IMR-90 (cell line): ENCODE measurements at regions of chr2 and their contacts with region 1.

Region 1: GRCh38 chr2:156229724-156230362 is 102.7 kb downstream of the NR4A2 start:
- DNase-seq: no peak
- ATAC-seq: no peak
- H3K4me3 ChIP-seq: no peak overlapping the region
- H3K27ac ChIP-seq: no peak overlapping the region
- H3K4me1 ChIP-seq: no peaks in the 10 kb centered on the region
- H3K27me3 ChIP-seq: no peaks in the 10 kb centered on the region
- CTCF ChIP-seq: no peak
- POLR2A ChIP-seq: no peak
- RAD21 ChIP-seq: no peak

Region 2: GRCh38 chr2:155310589-155310988 is 919.3 kb before region 1 on chr2:
- CTCF ChIA-PET with region 1: no interaction called
- POLR2A ChIA-PET with region 1: no interaction called
- dilution Hi-C with region 1: no loop called
- in situ Hi-C with region 1: no loop called
- intact Hi-C with region 1: no loop called
- DNase-seq: no peak
- ATAC-seq: no peak
- H3K4me3 ChIP-seq: no peak overlapping the region
- H3K27ac ChIP-seq: no peak overlapping the region
- H3K4me1 ChIP-seq: no peaks in the 10 kb centered on the region
- H3K27me3 ChIP-seq: no peaks in the 10 kb centered on the region
- CTCF ChIP-seq: peak; percentile 21; the same call in 1 of the 2 replicates
- POLR2A ChIP-seq: no peak
- RAD21 ChIP-seq: 0 out of 2 replicates have a peak, but pooled peaks have one; percentile 19

Region 3: GRCh38 chr2:156803248-156803647 is 573.4 kb after region 1 on chr2:
- CTCF ChIA-PET with region 1: no interaction called
- POLR2A ChIA-PET with region 1: no interaction called
- dilution Hi-C with region 1: no loop called
- in situ Hi-C with region 1: no loop called
- intact Hi-C with region 1: loop called (anchors 10 kb)
- DNase-seq: no peak
- ATAC-seq: no peak
- H3K4me3 ChIP-seq: no peak overlapping the region
- H3K27ac ChIP-seq: no peak overlapping the region
- H3K4me1 ChIP-seq: no peaks in the 10 kb centered on the region
- H3K27me3 ChIP-seq: no peaks in the 10 kb centered on the region
- CTCF ChIP-seq: no peak
- POLR2A ChIP-seq: no peak
- RAD21 ChIP-seq: no peak

Region 4: DNA sequence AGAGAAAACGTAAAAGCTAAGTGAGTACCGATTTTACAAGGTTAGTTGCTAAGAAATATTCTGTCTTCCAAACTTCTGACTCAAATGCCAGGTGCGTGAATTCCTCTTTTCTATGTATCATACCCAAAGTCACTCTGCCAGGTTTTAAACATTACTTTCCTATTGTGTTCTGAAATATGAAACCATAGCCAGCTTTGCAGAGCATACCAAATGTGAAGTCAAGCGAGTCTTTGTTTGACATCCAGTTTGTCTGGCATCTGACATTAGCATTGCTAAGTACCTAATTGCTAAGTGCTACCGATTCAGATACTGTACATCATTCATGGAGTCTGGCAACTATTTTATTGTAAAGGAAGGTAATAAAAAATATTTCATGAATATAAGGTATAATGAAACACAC is 705.8 kb after region 1 on chr2:
- CTCF ChIA-PET with region 1: no interaction called
- POLR2A ChIA-PET with region 1: no interaction called
- dilution Hi-C with region 1: no loop called
- in situ Hi-C with region 1: no loop called
- intact Hi-C with region 1: no loop called
- DNase-seq: no peak
- ATAC-seq: no peak
- H3K4me3 ChIP-seq: no peak overlapping the region
- H3K27ac ChIP-seq: no peak overlapping the region
- H3K4me1 ChIP-seq: no peaks in the 10 kb centered on the region
- H3K27me3 ChIP-seq: no peaks in the 10 kb centered on the region
- CTCF ChIP-seq: no peak
- POLR2A ChIP-seq: no peak
- RAD21 ChIP-seq: no peak